HEK293 (cell line): ENCODE measurements at regions of chr22 and their contacts with region 1.

Region 1: DNA sequence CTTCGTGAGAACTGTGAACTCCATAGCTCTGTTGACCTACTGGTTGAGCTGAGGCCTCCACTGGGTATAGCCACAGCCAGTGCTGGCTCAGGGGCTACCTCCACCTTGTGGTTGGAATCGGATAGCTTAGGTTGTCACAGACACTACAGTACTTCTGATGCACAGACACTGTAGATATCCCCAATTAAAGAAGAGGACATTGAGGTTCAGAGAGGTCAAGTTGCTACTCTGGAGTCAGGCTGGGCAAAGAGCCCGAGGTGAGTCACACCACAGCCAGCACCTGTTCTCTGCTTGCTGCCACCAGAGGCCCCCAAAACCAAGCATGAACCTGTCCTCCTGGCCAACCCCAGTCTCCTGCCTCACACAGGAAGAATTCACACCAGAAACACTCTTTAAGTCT is 5.4 kb downstream of the UFD1 start:
- H3K4me3 ChIP-seq: no peak overlapping the region
- H3K27ac ChIP-seq: no peak overlapping the region
- H3K4me1 ChIP-seq: no peaks in the 10 kb centered on the region
- CTCF ChIP-seq: peak; percentile 22; the same call in 1 of the 2 replicates

Region 2: GRCh38 chr22:19422440-19423301 is 50.9 kb before region 1 on chr22:
- CTCF ChIA-PET with region 1: no interaction called
- POLR2A ChIA-PET with region 1: no interaction called
- H3K4me3 ChIP-seq: no peak overlapping the region
- H3K27ac ChIP-seq: no peak overlapping the region
- H3K4me1 ChIP-seq: no peaks in the 10 kb centered on the region
- CTCF ChIP-seq: no peak

Region 3: DNA sequence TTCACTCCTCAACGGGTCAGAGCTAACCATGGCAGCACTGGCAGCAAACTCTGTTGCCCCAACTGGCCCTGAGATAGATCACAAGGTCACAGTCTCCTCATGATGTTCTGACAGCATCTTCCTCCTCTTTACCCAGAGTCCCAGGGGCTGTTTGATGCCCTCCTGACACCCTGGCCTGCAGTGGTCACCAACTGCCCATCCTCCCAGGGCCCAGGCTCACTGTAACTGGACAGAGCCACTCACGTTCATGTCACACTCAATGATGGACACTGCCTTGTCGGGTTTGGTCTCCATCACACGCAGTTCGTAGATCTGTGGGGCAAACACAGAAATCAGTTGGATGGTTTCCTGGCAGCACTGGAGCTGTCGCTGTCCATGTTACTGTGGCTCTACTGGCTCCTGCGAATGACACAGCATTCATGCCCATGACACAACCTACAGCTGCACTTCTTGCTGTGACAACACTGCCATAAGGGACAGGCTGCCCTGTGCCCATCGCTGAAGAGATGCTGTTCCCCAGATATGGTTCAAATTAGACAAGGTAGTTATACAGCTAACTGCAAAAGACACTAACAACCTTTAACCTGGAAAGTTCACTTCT is 15.7 kb before region 1 on chr22:
- CTCF ChIA-PET with region 1: interaction called, 27 read pairs
- POLR2A ChIA-PET with region 1: no interaction called
- H3K4me3 ChIP-seq: no peak overlapping the region
- H3K27ac ChIP-seq: no peak overlapping the region
- H3K4me1 ChIP-seq: no peaks in the 10 kb centered on the region
- CTCF ChIP-seq: no peak

Region 4: GRCh38 chr22:19514831-19515565 is 41.4 kb after region 1 on chr22:
- CTCF ChIA-PET with region 1: no interaction called
- POLR2A ChIA-PET with region 1: no interaction called
- H3K4me3 ChIP-seq: no peak overlapping the region
- H3K27ac ChIP-seq: no peak overlapping the region
- H3K4me1 ChIP-seq: no peaks in the 10 kb centered on the region
- CTCF ChIP-seq: no peak